ENCODE measurements at regions of chr15 and their contacts with region 1.

Region 1: DNA sequence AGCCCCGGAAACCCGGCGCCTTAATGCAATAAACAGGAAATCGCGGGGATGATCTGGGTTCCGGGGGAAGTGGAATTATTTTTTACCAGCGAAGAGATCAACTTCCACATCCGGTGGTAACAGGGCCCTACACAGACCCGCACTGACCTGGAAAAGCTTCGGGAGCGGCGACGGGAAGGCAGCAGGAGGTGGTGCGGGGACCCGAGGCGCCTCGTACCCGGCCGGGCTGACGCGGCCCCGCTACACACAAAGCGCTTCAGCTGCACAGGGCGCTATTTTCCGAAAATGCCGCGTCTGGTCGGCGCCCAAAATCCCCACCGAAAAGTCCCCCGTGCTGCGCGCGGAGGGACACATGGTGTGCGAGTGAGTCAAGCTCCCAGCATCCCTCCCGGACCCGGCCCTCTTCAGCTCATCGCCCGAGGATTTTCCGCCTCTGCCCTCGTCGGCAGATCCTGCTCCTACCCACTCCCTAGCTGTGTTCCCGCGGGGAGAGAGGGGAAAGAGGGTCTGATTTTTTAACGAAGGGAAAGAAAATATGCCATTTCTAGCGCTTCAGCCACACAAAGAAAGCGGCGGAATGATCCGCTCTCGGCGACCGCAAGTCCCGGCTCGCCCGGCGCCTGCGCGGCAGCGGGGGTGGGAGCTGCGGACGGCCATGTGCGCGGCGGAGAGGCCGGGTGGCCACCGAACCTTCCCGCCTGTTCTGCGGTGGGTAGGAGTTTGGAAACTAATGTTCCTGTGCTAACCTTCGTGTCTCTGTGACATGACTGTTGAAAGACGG is at the start of gene GABPB1:
- DNase-seq: peak; percentile 72 to 95 (median 85)
- ATAC-seq: peak; percentile 45
- H3K4me3 ChIP-seq: peak within 1 kb of the TSS; percentile 86 to 90
- H3K4me3 Mint-ChIP-seq: peak within 1 kb of the TSS; percentile 93
- H3K27ac ChIP-seq: peak within 1 kb of the TSS; percentile 94 to 97
- H3K27ac Mint-ChIP-seq: peak within 1 kb of the TSS; percentile 98
- H3K4me1 ChIP-seq: peaks cover 38% of the 10 kb centered on the region
- H3K4me1 Mint-ChIP-seq: peaks cover 55% of the 10 kb centered on the region
- H3K27me3 ChIP-seq: no peaks in the 10 kb centered on the region
- H3K27me3 Mint-ChIP-seq: no peaks in the 10 kb centered on the region
- CTCF ChIP-seq: no peak
- total RNA-seq, gene GABPB1: 27.0 to 31.0 TPM

Region 2: DNA sequence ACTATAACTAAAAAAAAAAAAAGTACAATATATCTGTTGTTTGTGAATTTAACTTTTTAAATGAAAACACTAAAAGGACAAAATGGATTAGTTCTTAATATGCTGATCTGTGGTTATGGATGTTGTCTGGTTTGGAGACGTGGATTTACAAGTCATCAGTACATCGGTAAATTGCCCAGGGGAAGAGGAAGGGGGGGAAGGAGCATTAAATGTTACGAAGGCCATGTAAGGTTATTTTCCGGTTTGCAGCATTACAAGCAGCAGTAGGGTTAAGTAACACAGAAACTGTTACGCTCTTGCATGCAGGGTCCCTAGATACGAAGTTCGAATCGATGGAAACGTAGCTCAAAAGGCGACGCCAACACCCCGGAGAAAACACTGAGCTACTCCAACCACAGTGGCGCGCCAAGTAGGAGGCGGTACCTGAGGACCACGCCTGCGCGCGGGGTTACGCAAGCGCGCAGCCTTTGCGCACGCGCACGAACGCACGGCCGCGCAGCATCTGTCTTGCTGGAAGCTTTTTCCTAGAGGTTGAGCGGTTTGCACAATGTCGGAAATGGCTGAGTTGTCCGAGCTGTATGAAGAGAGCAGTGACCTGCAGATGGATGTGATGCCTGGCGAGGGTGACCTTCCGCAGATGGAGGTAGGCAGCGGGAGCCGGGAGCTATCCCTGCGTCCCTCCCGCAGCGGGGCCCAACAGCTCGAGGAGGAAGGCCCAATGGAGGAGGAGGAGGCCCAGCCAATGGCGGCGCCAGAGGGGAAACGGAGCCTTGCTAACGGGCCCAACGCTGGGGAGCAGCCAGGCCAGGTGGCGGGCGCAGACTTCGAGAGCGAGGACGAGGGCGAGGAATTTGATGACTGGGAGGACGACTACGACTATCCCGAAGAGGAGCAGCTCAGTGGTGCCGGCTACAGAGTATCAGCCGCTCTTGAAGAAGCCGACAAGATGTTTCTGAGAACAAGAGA is 1477.1 kb before region 1 on chr15 and contains the start of gene EID1:
- CTCF ChIA-PET with region 1: interaction called, 3 read pairs
- POLR2A ChIA-PET with region 1: interaction called, 4 read pairs
- intact Hi-C with region 1: loop called in 1 of 2 experiments (anchors 5 kb)
- DNase-seq: peak; percentile 86 to 97 (median 92)
- ATAC-seq: peak; percentile 94
- H3K4me3 ChIP-seq: peak within 1 kb of the TSS; percentile 76 to 91
- H3K4me3 Mint-ChIP-seq: peak within 1 kb of the TSS; percentile 94
- H3K27ac ChIP-seq: peak within 1 kb of the TSS; percentile 74 to 84
- H3K27ac Mint-ChIP-seq: peak within 1 kb of the TSS; percentile 98
- H3K4me1 ChIP-seq: peaks cover 11% of the 10 kb centered on the region
- H3K4me1 Mint-ChIP-seq: peaks cover 23% of the 10 kb centered on the region
- H3K27me3 ChIP-seq: peaks cover 0 to 2% of the 10 kb centered on the region in 2 experiments
- H3K27me3 Mint-ChIP-seq: peaks cover 6% of the 10 kb centered on the region
- CTCF ChIP-seq: no peak
- total RNA-seq, gene EID1: 34.5 to 34.7 TPM

Region 3: DNA sequence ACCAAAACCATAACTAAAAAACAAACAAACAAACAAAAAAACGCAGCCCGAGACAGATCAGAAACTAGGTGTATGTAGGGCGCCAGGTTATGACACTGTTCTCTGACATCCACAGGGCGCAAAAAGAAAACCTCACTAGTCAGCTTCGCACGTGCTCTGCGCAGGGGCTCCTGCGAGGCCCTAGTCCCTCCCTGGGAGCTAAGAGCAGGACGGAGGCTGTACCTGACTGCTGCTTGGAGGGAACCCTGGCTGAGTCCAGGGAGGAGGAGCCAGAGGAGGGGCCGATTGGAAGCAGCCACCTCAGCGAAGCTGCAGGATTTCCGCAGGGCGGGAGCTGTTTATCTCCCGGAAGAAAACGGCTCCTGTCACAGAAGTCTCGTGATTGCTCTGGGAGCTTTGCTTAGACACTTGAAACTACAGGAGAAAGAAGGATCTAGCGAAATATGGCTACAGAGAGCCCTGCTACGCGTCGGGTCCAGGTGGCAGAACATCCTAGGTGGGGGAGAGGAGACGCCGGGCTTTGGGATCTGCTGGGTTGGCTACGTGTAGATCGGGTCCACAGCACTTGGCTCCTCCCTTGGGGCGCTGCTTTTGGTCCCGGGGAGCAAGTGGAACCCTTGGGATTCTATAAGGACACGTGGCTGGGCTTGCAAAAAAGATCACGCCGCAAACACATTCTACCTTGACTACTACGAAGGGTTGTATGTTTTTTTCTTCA is 1185.0 kb before region 1 on chr15 and contains the start of gene GALK2:
- CTCF ChIA-PET with region 1: no interaction called
- POLR2A ChIA-PET with region 1: interaction called, 5 read pairs
- intact Hi-C with region 1: loop called in 1 of 2 experiments (anchors 2 kb)
- DNase-seq: peak; percentile 58 to 91 (median 81)
- ATAC-seq: peak; percentile 99
- H3K4me3 ChIP-seq: peak within 1 kb of the TSS; percentile 67 to 75
- H3K4me3 Mint-ChIP-seq: peak within 1 kb of the TSS; percentile 96
- H3K27ac ChIP-seq: peak within 1 kb of the TSS; percentile 74 to 88
- H3K27ac Mint-ChIP-seq: peak within 1 kb of the TSS; percentile 98
- H3K4me1 ChIP-seq: peaks cover 11% of the 10 kb centered on the region
- H3K4me1 Mint-ChIP-seq: peaks cover 43% of the 10 kb centered on the region
- H3K27me3 ChIP-seq: no peaks in the 10 kb centered on the region
- H3K27me3 Mint-ChIP-seq: no peaks in the 10 kb centered on the region
- CTCF ChIP-seq: no peak
- total RNA-seq, gene GALK2: 7.7 to 10.7 TPM

Region 4: DNA sequence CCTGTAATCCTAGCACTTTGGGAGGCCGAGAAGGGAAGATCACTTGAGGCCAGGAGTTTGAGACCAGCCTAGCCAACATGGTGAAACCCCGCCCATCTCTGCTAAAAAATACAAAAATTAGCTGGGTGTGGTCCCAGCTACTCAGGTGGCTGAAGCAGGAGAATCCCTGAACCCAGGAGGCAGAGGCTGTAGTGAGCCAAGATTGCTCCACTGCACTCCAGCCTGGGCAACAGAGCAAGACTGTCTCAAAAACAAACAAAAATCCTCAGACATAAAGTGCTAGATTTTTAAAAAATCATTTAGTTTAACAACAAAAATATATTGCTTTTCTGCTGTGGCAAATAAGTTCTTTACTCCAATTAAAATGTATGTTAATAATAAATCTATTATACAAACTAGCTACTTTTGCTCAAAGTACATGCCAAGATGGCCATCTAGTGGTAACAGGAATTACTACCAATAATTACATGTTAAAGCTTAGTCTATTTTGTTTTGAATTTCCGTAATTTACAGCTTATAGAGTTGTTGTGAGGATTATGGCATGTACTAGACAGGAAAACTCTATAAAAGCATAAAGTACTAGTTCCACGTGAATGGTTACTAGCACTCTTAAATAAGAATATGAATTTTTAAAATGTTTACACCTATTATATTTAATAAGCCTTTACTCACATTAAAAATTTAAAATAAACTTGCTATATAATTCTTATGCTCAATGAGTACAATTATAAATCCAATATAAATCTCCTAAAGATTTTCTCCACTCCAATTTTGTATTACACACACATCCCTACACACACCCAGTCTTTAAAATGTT is 39.0 kb before region 1 on chr15:
- CTCF ChIA-PET with region 1: interaction called, 5 read pairs
- POLR2A ChIA-PET with region 1: interaction called, 4 read pairs
- intact Hi-C with region 1: loop called (anchors 2 kb)
- DNase-seq: peak in 2 of 9 experiments; percentile 58 to 71
- ATAC-seq: peak; percentile 29
- H3K4me3 ChIP-seq: no peak overlapping the region
- H3K4me3 Mint-ChIP-seq: no peak overlapping the region
- H3K27ac ChIP-seq: no peak overlapping the region
- H3K27ac Mint-ChIP-seq: no peak overlapping the region
- H3K4me1 ChIP-seq: no peaks in the 10 kb centered on the region
- H3K4me1 Mint-ChIP-seq: peaks cover 19% of the 10 kb centered on the region
- H3K27me3 ChIP-seq: no peaks in the 10 kb centered on the region
- H3K27me3 Mint-ChIP-seq: no peaks in the 10 kb centered on the region
- CTCF ChIP-seq: peak; percentile 97

Region 5: DNA sequence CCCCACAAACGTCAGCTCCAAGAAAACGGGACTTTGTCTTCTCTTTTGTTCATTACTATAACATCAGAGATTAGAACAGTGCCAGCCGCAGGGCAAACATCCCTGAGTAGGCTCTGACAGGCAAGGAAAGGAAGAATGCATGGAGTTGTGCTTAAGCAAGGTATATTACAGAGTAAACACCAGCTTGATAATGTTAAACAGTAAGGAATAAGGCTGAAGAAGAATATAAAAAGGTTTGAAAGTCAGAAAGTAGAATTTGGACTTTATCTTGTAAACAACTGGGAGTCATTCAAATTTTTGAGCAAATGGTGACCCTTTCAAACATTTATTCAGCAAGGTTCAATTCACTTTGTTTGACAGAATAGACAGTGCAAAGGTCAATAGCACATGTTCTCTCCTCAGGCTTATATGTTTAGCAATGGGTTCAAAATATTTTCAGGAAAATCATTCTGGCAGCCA is 11.0 kb before region 1 on chr15:
- CTCF ChIA-PET with region 1: no interaction called
- POLR2A ChIA-PET with region 1: interaction called, 16 read pairs
- intact Hi-C with region 1: no loop called
- DNase-seq: no peak
- ATAC-seq: no peak
- H3K4me3 ChIP-seq: no peak overlapping the region
- H3K4me3 Mint-ChIP-seq: no peak overlapping the region
- H3K27ac ChIP-seq: no peak overlapping the region
- H3K27ac Mint-ChIP-seq: no peak overlapping the region
- H3K4me1 ChIP-seq: peaks cover 1% of the 10 kb centered on the region
- H3K4me1 Mint-ChIP-seq: peaks cover 35% of the 10 kb centered on the region
- H3K27me3 ChIP-seq: no peaks in the 10 kb centered on the region
- H3K27me3 Mint-ChIP-seq: no peaks in the 10 kb centered on the region
- CTCF ChIP-seq: no peak

Region 6: DNA sequence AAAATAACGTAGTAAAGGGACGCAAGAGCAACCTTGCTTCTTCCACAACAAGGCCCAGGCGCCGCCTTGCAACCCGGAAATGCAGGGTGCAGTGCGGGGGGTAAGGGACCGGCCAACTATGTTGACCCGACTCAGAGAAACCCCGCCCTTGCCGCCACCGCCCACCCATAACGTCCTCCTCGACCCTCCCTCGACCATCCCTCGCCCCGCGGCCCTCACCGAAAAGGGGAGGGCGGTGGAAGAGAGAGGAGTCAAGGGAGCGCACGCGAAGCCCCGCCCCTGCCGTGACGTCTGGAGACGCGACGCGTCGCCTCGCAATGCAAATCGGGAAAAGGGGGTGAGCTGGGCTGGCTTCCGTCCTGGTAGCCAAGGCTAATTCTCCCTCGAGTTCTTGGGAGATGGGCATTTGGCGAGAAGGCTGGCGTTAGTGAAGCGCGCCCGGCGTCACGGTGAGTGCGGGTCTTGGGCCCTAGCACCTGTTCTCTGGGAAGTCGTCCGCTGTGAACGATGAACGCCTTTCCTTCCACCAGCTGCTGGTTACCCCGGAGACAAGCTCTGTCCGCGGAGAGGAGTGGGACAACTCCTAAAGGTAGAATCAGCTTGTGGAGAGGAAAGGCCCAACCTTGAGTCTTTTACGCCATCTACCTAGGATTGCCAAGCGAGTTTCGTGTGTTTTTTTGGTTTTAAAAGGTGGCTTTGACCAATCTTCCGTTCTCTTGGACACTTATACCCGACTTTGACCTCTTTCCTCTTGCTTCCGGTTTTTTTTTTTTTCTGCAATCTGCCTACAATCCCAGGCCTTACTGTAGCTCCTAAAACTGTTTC is 69.2 kb after region 1 on chr15 and contains the start of gene USP8:
- CTCF ChIA-PET with region 1: interaction called, 4 read pairs
- POLR2A ChIA-PET with region 1: interaction called, 34 read pairs
- intact Hi-C with region 1: loop called (anchors 1 kb)
- DNase-seq: peak; percentile 86 to 97 (median 92)
- ATAC-seq: peak; percentile 96
- H3K4me3 ChIP-seq: peak within 1 kb of the TSS; percentile 84 to 95
- H3K4me3 Mint-ChIP-seq: peak within 1 kb of the TSS; percentile 98
- H3K27ac ChIP-seq: peak within 1 kb of the TSS; percentile 91 to 96
- H3K27ac Mint-ChIP-seq: peak within 1 kb of the TSS; percentile 99
- H3K4me1 ChIP-seq: peaks cover 27% of the 10 kb centered on the region
- H3K4me1 Mint-ChIP-seq: peaks cover 42% of the 10 kb centered on the region
- H3K27me3 ChIP-seq: no peaks in the 10 kb centered on the region
- H3K27me3 Mint-ChIP-seq: no peaks in the 10 kb centered on the region
- CTCF ChIP-seq: no peak
- total RNA-seq, gene USP8: 59.5 to 61.5 TPM

Region 7: GRCh38 chr15:50765195-50765973 is 410.4 kb after region 1 on chr15 and contains the start of gene SPPL2A:
- CTCF ChIA-PET with region 1: no interaction called
- POLR2A ChIA-PET with region 1: no interaction called
- intact Hi-C with region 1: loop called in 1 of 2 experiments (anchors 1 kb)
- DNase-seq: peak; percentile 50 to 90 (median 76)
- ATAC-seq: peak; percentile 91
- H3K4me3 ChIP-seq: peak within 1 kb of the TSS; percentile 69 to 77
- H3K4me3 Mint-ChIP-seq: peak within 1 kb of the TSS; percentile 90
- H3K27ac ChIP-seq: peak within 1 kb of the TSS; percentile 63 to 90
- H3K27ac Mint-ChIP-seq: peak within 1 kb of the TSS; percentile 92
- H3K4me1 ChIP-seq: peaks cover 20% of the 10 kb centered on the region
- H3K4me1 Mint-ChIP-seq: peaks cover 45% of the 10 kb centered on the region
- H3K27me3 ChIP-seq: no peaks in the 10 kb centered on the region
- H3K27me3 Mint-ChIP-seq: no peaks in the 10 kb centered on the region
- CTCF ChIP-seq: no peak
- total RNA-seq, gene SPPL2A: 33.4 to 36.8 TPM

Measured in CD8-positive, alpha-beta T cell (primary cell).